Activated CD8-positive, alpha-beta T cell treated with anti-CD3 and anti-CD28 coated beads, Interleukin-2, amount 10 ng/mL, durations not matched to agents 7 days and 5 days (primary cell): ENCODE measurements at regions of chr2 and their contacts with region 1.

Region 1: GRCh38 chr2:26846328-26847306 is 1.3 kb upstream of the DPYSL5 start:
- DNase-seq: peak; percentile 72
- ATAC-seq: peak; percentile 82
- H3K4me3 Mint-ChIP-seq: peak overlapping the region; percentile 36
- H3K27ac Mint-ChIP-seq: no peak overlapping the region
- H3K4me1 Mint-ChIP-seq: peaks cover 9% of the 10 kb centered on the region
- H3K27me3 Mint-ChIP-seq: peaks cover 48% of the 10 kb centered on the region

Region 2: DNA sequence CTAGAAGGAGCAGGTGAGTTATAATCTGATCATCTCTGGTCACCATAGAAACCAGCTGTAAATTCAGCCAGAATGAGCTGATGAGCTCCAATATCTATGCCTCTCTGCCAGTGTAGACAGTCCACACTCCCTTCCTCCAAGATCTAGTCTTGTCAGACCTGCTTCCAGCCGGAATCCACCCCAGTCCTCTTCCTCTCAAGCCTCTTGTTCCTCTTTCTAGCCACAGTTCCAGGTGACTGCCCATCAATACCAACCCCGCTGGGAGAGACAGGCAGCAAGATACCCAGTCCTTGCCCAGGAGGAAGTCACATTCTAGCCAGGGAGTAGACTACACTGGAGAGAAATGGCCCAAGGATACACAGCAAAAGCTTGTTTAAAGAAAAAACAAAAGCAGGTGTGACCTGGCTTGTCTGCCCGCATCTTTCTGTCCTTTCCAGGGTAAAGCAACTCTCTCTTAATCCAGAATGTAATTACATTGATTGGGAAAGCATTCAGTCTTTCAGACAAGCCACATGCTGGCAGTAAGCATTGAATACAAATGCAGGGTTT is 91.5 kb before region 1 on chr2:
- CTCF ChIA-PET with region 1: no interaction called
- POLR2A ChIA-PET with region 1: no interaction called
- DNase-seq: no peak
- ATAC-seq: peak; percentile 30
- H3K4me3 Mint-ChIP-seq: no peak overlapping the region
- H3K27ac Mint-ChIP-seq: no peak overlapping the region
- H3K4me1 Mint-ChIP-seq: peaks cover 21% of the 10 kb centered on the region
- H3K27me3 Mint-ChIP-seq: peaks cover 9% of the 10 kb centered on the region

Region 3: DNA sequence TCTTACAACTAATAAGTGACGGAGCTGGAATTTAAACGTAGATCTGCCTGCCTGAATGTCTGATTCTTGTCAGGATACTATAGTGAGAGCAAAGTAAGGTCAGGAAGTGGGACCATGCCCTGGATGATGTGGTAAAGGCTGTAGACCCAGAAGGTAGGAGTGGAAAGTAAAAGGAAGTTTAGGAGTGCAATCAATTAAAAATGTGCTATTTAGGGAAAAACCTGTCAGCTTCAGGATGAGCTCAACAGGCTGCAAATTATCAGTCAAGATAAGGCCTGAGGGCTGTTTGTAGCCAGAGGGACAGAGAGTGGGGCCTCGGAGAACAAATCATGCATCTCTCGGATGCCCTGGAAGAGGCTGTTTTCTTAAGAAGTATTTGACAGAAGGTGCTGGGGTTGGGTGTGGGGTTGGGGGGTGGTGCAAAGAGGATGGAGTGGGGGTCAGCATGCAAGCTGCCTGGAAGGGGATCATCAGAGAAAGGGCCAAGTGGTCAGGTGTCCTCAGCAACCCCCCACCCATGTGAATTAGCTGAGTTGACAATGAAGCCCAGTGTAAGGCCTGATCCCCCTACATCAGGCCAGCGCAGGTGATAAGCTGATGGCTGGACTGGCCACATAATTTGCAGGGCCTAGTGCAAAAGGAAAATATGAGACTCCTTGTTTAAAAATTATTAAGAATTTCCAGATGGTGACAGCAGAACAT is 70.7 kb after region 1 on chr2:
- CTCF ChIA-PET with region 1: interaction called, 76 read pairs
- POLR2A ChIA-PET with region 1: no interaction called
- DNase-seq: no peak
- ATAC-seq: no peak
- H3K4me3 Mint-ChIP-seq: no peak overlapping the region
- H3K27ac Mint-ChIP-seq: no peak overlapping the region
- H3K4me1 Mint-ChIP-seq: no peaks in the 10 kb centered on the region
- H3K27me3 Mint-ChIP-seq: peaks cover 18% of the 10 kb centered on the region

Region 4: DNA sequence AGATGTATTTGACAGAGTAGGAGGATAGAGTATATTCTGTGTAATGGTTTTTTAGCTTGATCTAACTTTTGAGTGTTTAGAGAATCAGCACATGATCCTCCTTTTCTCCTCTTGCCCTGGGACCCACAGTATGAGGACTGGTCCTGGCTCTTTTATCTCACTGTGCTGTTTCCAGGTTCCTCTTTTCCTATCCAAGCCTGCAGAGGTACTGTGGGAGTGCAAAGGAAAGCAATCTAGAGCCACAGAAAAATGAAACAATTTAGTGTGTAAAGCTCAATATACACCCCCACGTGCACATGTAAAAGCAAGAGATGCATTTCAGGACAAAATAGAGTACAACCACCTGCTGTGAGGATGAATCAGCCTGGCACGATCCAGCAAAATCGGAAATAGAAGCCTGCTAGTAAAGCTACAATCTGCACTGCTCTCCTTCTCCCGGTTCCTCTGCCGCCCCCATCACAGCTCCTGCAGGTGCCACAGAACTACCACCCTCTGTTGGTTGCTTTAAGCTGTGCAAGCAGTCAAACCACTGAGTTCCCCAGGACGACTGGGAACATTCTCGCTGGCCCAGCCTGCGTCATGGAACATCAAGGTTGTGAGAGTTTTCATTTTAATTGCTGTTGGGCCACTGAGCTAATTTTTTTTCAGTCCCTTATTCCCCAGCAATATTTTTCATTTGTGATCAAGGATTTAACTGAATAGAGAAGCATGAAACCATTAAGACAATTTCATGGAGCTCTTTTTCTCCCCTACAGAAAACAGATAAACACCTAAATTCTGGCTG is 76.0 kb after region 1 on chr2:
- CTCF ChIA-PET with region 1: interaction called, 76 read pairs
- POLR2A ChIA-PET with region 1: no interaction called
- DNase-seq: peak; percentile 51
- ATAC-seq: peak; percentile 90
- H3K4me3 Mint-ChIP-seq: no peak overlapping the region
- H3K27ac Mint-ChIP-seq: no peak overlapping the region
- H3K4me1 Mint-ChIP-seq: peaks cover 5% of the 10 kb centered on the region
- H3K27me3 Mint-ChIP-seq: peaks cover 28% of the 10 kb centered on the region

Region 5: DNA sequence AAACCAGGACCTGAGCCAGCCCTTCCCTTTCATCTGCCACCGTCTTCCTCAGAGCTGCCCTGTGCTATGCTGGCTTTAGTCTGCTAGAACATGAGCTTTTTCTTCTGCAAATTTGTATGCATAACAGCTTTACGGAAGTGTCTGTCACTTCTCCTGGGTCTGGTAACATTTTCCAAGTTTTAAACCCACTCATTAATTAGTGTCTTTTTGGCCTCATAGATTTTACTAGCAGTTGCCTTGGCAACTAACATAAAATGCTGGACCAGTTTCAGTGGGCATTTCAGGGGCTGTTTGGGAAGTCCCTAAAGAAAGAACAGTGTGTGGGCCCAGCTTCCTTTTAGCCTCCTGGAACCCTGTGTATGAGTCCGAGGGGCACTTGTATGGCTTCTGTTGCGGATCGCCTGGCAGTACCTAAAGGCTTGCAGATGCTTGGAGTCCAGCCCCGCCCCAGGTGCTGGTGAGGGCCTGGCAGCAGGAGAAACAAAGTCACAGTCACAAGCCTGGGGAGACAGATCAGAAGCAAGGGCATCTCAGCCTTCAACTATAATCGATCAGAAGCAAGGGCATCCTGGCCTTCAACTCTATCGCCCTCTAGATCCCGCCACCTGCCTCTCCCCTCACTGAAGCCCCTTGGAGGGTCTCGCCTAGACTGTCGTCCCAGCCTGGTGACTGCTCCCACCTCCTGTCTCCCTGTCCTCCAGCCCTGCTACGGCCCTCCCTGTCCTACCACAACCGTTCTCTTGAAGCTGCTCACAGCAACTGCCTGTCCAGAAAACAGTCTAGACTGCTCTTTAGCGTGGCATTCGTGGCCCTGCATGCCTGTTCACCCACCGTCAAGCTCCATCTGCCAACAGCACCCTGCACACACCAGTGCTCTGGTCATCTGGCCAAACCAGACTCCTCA is 87.1 kb after region 1 on chr2:
- CTCF ChIA-PET with region 1: interaction called, 80 read pairs
- POLR2A ChIA-PET with region 1: no interaction called
- DNase-seq: no peak
- ATAC-seq: no peak
- H3K4me3 Mint-ChIP-seq: no peak overlapping the region
- H3K27ac Mint-ChIP-seq: no peak overlapping the region
- H3K4me1 Mint-ChIP-seq: no peaks in the 10 kb centered on the region
- H3K27me3 Mint-ChIP-seq: peaks cover 3% of the 10 kb centered on the region

Region 6: GRCh38 chr2:26942543-26943295 is 96.1 kb after region 1 on chr2:
- CTCF ChIA-PET with region 1: interaction called, 80 read pairs
- POLR2A ChIA-PET with region 1: no interaction called
- DNase-seq: peak; percentile 73
- ATAC-seq: peak; percentile 60
- H3K4me3 Mint-ChIP-seq: no peak overlapping the region
- H3K27ac Mint-ChIP-seq: no peak overlapping the region
- H3K4me1 Mint-ChIP-seq: no peaks in the 10 kb centered on the region
- H3K27me3 Mint-ChIP-seq: peaks cover 3% of the 10 kb centered on the region

Region 7: GRCh38 chr2:27016801-27017325 is 170.2 kb after region 1 on chr2:
- CTCF ChIA-PET with region 1: interaction called, 21 read pairs
- POLR2A ChIA-PET with region 1: no interaction called
- DNase-seq: peak; percentile 67
- ATAC-seq: peak; percentile 57
- H3K4me3 Mint-ChIP-seq: no peak overlapping the region
- H3K27ac Mint-ChIP-seq: no peak overlapping the region
- H3K4me1 Mint-ChIP-seq: peaks cover 8% of the 10 kb centered on the region
- H3K27me3 Mint-ChIP-seq: no peaks in the 10 kb centered on the region